ENCODE measurements at regions of chr1 and their contacts with region 1.

Region 1: GRCh38 chr1:168082008-168082876 is 54.5 kb downstream of the GPR161 start:
- DNase-seq: no peak
- H3K4me3 ChIP-seq: no peak overlapping the region
- H3K27me3 ChIP-seq: no peaks in the 10 kb centered on the region
- CTCF ChIP-seq: peak; percentile 96

Region 2: GRCh38 chr1:168092566-168093355 is 10.5 kb after region 1 on chr1:
- CTCF ChIA-PET with region 1: interaction called, 15 read pairs
- POLR2A ChIA-PET with region 1: no interaction called
- DNase-seq: no peak
- H3K4me3 ChIP-seq: no peak overlapping the region
- H3K27me3 ChIP-seq: no peaks in the 10 kb centered on the region
- CTCF ChIP-seq: peak; percentile 29; the same call in 1 of the 2 replicates

Region 3: DNA sequence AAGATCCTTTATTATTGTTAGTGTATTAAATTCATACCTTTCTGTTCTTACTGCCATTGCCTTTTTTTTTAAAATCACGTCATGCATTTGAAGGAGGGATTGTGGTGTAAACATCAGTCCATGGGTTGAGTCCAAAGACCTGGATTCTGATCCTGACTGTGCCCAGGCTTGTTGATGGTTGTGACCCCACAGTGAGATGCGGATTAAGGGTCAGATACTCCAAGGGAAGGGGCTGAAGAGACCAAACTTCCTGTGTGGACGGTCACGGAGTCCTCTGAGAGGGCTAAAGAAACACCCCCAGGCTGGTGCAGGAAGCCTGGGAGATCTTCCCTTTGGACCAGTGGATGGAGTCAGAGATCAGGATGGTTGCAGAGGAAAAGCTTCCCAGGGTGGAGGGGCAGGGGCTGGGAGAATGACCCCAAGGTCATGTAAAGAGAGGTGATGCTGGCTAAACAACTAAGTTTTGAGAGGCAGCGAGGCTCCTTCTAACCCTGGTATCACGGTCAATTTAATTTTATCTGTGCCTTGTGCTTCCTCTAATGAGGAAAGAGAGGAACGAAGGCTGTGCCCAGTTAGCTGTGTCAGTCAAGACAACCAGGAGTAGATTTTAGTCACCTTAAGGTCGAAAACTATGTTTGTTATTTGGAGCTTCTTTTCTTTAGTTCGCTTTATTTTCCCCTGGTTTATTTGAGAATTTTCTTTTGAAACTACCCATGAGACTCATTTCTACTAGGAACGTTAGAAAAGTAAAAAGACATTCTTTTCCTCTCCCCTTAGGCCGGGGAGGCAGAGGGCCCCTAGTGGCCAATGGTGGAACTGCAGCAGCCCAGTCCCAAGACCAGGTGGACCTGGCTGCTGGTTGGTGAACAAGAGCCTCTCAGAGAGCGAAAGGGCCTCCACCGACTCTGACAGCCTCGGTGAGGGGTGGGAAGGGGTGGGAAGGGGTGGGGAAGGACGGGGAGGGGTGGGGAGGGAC is 63.2 kb after region 1 on chr1:
- CTCF ChIA-PET with region 1: interaction called, 15 read pairs
- POLR2A ChIA-PET with region 1: no interaction called
- DNase-seq: peak; percentile 17
- H3K4me3 ChIP-seq: no peak overlapping the region
- H3K27me3 ChIP-seq: 0 out of 2 replicates have a peak, but pooled peaks cover 3% of the 10 kb centered on the region
- CTCF ChIP-seq: peak; percentile 99

Region 4: GRCh38 chr1:168234846-168235547 is 152.8 kb after region 1 on chr1:
- CTCF ChIA-PET with region 1: interaction called, 11 read pairs
- POLR2A ChIA-PET with region 1: no interaction called
- DNase-seq: no peak
- H3K4me3 ChIP-seq: no peak overlapping the region
- H3K27me3 ChIP-seq: no peaks in the 10 kb centered on the region
- CTCF ChIP-seq: peak; percentile 71

Region 5: DNA sequence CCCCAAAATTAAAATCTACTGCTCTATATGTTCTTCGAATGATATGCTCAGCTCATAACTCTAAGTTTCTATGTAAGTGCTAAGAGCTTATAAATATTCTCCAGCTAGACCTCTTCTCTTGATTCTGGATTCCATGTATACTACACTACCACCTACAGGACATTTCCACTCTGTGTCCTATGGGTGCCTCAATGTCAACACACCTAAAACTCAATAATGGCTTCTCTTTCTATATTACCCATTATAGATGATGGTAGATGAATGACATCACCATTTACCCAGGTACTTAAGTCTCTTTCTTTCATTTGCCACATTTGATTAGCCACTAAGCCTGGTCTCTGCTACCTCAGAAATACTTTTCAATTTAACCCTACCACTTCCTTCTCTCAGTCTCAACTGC is 239.7 kb after region 1 on chr1:
- CTCF ChIA-PET with region 1: interaction called, 20 read pairs
- POLR2A ChIA-PET with region 1: interaction called, 3 read pairs
- DNase-seq: no peak
- H3K4me3 ChIP-seq: no peak overlapping the region
- H3K27me3 ChIP-seq: no peaks in the 10 kb centered on the region
- CTCF ChIP-seq: peak; percentile 51